Activated CD8-positive, alpha-beta T cell treated with anti-CD3 and anti-CD28 coated beads for 36 hours (primary cell): ENCODE measurements at regions of chr10 and their contacts with region 1.

Region 1: GRCh38 chr10:51389415-51390321 is 309.7 kb downstream of the CSTF2T start:
- DNase-seq: peak; percentile 56
- ATAC-seq: peak; percentile 58
- H3K4me3 Mint-ChIP-seq: no peak overlapping the region
- H3K27ac Mint-ChIP-seq: no peak overlapping the region
- H3K4me1 Mint-ChIP-seq: no peaks in the 10 kb centered on the region
- H3K27me3 Mint-ChIP-seq: no peaks in the 10 kb centered on the region
- CTCF ChIP-seq: peak; percentile 66

Region 2: GRCh38 chr10:51524041-51524440 is 134.4 kb after region 1 on chr10:
- CTCF ChIA-PET with region 1: no interaction called
- POLR2A ChIA-PET with region 1: no interaction called
- intact Hi-C with region 1: no loop called
- DNase-seq: no peak
- ATAC-seq: no peak
- H3K4me3 Mint-ChIP-seq: no peak overlapping the region
- H3K27ac Mint-ChIP-seq: no peak overlapping the region
- H3K4me1 Mint-ChIP-seq: no peaks in the 10 kb centered on the region
- H3K27me3 Mint-ChIP-seq: peaks cover 1% of the 10 kb centered on the region
- CTCF ChIP-seq: no peak

Region 3: GRCh38 chr10:51960494-51960895 is 570.8 kb after region 1 on chr10:
- CTCF ChIA-PET with region 1: interaction called, 14 read pairs
- POLR2A ChIA-PET with region 1: no interaction called
- intact Hi-C with region 1: loop called (anchors 5 kb)
- DNase-seq: no peak
- ATAC-seq: peak; percentile 30
- H3K4me3 Mint-ChIP-seq: no peak overlapping the region
- H3K27ac Mint-ChIP-seq: no peak overlapping the region
- H3K4me1 Mint-ChIP-seq: no peaks in the 10 kb centered on the region
- H3K27me3 Mint-ChIP-seq: peaks cover 13% of the 10 kb centered on the region
- CTCF ChIP-seq: peak; percentile 66